B cell (primary cell): ENCODE measurements at regions of chr16 and their contacts with region 1.

Region 1: DNA sequence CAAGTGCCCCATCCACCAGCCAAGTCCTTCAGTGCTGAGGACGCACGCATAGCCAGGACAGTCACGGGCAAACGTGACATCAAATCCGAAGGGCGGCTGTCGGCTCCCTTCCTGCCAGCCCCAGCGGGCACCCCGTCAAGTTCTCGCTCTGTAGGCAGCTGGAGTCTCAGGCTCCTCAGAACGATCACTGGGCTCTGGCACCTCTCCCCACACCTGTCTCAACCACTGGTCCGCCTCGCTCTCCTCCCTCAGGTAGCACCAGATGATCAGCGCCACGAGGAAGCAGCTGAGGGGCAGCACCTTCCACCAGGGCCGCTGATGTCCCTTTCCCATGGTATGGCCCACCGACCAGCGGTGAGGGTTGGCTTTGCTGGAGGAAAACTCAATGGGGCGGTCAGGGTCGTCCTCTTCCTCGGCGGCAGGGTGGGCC is 421 bp downstream of the UQCC4 start:
- DNase-seq: no peak
- ATAC-seq: no peak
- H3K4me3 ChIP-seq: peak overlapping the region; percentile 74 to 95 (median 88)
- H3K4me3 Mint-ChIP-seq: peak overlapping the region; percentile 94
- H3K27ac ChIP-seq: peak overlapping the region; percentile 86 to 92
- H3K27ac Mint-ChIP-seq: peak overlapping the region; percentile 99
- H3K4me1 ChIP-seq: peaks cover 6 to 19% of the 10 kb centered on the region in 2 donors
- H3K4me1 Mint-ChIP-seq: peaks cover 22% of the 10 kb centered on the region
- H3K27me3 ChIP-seq: no peaks in the 10 kb centered on the region
- H3K27me3 Mint-ChIP-seq: no peaks in the 10 kb centered on the region
- CTCF ChIP-seq: no peak

Region 2: DNA sequence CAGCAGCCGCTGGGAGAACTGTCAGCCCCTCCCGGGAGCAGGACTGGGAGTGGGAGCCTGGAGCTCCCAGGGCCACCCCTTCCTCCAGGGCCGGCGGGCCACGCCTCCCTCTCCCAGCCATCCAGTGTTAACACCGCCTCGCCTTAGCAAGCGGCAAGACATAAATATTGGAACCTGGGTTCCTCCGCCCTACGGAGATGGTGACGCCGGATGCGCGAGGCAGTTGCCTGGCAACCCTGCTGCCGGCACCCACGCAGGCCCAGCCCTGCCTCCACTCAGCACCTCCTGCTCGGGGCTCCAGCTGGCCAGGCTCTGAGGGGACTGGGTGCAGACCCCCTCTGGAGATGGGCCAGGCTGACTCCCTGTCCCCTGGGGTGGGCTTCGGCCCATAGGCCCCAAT is 294.7 kb before region 1 on chr16:
- CTCF ChIA-PET with region 1: no interaction called
- POLR2A ChIA-PET with region 1: no interaction called
- intact Hi-C with region 1: no loop called
- DNase-seq: no peak
- ATAC-seq: no peak
- H3K4me3 ChIP-seq: no peak overlapping the region
- H3K4me3 Mint-ChIP-seq: no peak overlapping the region
- H3K27ac ChIP-seq: no peak overlapping the region
- H3K27ac Mint-ChIP-seq: no peak overlapping the region
- H3K4me1 ChIP-seq: no peaks in the 10 kb centered on the region
- H3K4me1 Mint-ChIP-seq: no peaks in the 10 kb centered on the region
- H3K27me3 ChIP-seq: no peaks in the 10 kb centered on the region
- H3K27me3 Mint-ChIP-seq: no peaks in the 10 kb centered on the region
- CTCF ChIP-seq: no peak

Region 3: DNA sequence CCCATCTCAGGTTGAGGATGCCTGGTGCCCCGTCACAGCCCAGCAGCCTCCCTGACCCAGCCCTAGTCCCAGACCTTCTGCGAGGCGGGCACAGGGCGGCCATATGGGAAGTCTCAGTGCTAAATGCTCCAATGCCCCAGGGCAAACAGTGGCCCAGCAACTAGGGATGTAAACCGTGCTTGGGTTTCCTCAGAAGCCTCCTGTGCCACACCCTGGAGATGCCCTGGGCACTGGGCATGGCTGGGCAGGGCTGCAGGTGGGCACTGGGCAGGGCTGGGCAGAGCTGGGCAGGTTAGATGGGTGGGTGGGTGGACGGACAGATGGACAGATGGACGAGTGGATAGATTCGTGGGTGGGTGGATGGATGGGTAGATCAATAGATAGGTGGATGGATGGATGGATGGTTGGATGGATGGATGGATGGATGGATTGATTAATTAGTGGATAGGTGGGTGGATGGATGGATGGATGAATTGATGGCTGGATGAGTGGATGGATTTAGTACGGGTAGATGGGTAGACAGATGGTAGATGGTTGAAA is 147.5 kb before region 1 on chr16:
- CTCF ChIA-PET with region 1: no interaction called
- POLR2A ChIA-PET with region 1: no interaction called
- intact Hi-C with region 1: no loop called
- DNase-seq: no peak
- ATAC-seq: no peak
- H3K4me3 ChIP-seq: no peak overlapping the region
- H3K4me3 Mint-ChIP-seq: no peak overlapping the region
- H3K27ac ChIP-seq: no peak overlapping the region
- H3K27ac Mint-ChIP-seq: no peak overlapping the region
- H3K4me1 ChIP-seq: peaks cover 0 to 4% of the 10 kb centered on the region in 2 donors
- H3K4me1 Mint-ChIP-seq: no peaks in the 10 kb centered on the region
- H3K27me3 ChIP-seq: peaks cover 0 to 24% (median 3%) of the 10 kb centered on the region in 4 experiments
- H3K27me3 Mint-ChIP-seq: peaks cover 29% of the 10 kb centered on the region
- CTCF ChIP-seq: no peak

Region 4: DNA sequence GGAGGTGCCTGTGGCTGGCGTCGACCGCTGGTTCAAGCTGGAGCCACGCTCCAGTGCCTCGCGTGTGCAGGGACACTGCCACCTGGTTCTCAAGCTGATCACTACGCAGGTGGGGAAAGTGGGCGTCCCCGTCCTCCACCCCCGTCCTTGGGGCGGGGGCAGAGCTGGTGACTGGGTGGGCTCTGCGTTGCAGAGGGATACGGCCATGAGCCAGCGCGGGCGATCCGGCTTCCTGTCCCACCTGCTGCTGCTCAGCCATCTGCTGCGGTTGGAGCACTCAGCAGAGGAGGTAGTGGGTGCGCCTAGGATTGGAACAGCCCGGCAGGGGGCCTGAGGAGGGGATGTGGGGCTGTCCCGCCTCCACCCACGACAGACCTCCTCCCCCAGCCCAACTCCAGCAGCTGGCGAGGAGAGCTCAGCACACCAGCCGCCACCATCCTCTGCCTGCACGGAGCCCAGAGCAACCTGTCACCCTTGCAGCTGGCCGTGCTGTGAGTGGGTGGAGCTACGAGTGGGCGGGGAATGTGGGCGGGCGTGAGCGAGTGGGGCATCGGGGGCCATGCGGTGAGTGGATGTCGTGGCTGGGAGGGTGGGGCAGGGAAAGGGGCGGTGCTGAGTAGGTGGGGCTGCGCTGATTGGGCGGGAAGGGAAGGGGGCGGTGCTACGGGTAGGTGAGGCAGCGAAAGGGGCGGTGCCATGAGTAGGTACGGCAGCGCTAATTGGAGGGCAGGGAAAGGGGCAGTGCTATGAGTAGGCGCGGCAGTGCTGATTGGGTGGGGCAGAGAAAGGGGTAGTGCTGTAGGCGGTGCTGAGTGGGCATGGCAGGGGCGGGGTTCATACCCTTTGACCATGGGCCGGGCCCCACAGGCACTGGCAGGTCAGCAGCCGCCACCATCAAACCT is 77.3 kb before region 1 on chr16:
- CTCF ChIA-PET with region 1: no interaction called
- POLR2A ChIA-PET with region 1: interaction called, 5 read pairs
- intact Hi-C with region 1: loop called (anchors 2 kb)
- DNase-seq: peak; percentile 98
- ATAC-seq: peak; percentile 86
- H3K4me3 ChIP-seq: peak overlapping the region in 4 of 5 experiments; percentile 38 to 68 (median 44)
- H3K4me3 Mint-ChIP-seq: peak overlapping the region; percentile 86
- H3K27ac ChIP-seq: peak overlapping the region in 1 of 2 donors; percentile 42
- H3K27ac Mint-ChIP-seq: peak overlapping the region; percentile 91
- H3K4me1 ChIP-seq: peaks cover 16 to 30% of the 10 kb centered on the region in 2 donors
- H3K4me1 Mint-ChIP-seq: peaks cover 23% of the 10 kb centered on the region
- H3K27me3 ChIP-seq: no peaks in the 10 kb centered on the region
- H3K27me3 Mint-ChIP-seq: no peaks in the 10 kb centered on the region
- CTCF ChIP-seq: peak; percentile 23

Region 5: GRCh38 chr16:1433756-1434155 is 13.6 kb after region 1 on chr16:
- CTCF ChIA-PET with region 1: no interaction called
- POLR2A ChIA-PET with region 1: interaction called, 12 read pairs
- intact Hi-C with region 1: no loop called
- DNase-seq: no peak
- ATAC-seq: no peak
- H3K4me3 ChIP-seq: peak overlapping the region in 1 of 5 experiments; percentile 43
- H3K4me3 Mint-ChIP-seq: no peak overlapping the region
- H3K27ac ChIP-seq: peak overlapping the region in 1 of 2 donors; percentile 9
- H3K27ac Mint-ChIP-seq: no peak overlapping the region
- H3K4me1 ChIP-seq: peaks cover 15 to 34% of the 10 kb centered on the region in 2 donors
- H3K4me1 Mint-ChIP-seq: peaks cover 5% of the 10 kb centered on the region
- H3K27me3 ChIP-seq: no peaks in the 10 kb centered on the region
- H3K27me3 Mint-ChIP-seq: no peaks in the 10 kb centered on the region
- CTCF ChIP-seq: no peak

Region 6: GRCh38 chr16:1481906-1482835 is 62.0 kb after region 1 on chr16:
- CTCF ChIA-PET with region 1: interaction called, 3 read pairs
- POLR2A ChIA-PET with region 1: interaction called, 6 read pairs
- intact Hi-C with region 1: loop called (anchors 2 kb)
- DNase-seq: no peak
- ATAC-seq: no peak
- H3K4me3 ChIP-seq: no peak overlapping the region
- H3K4me3 Mint-ChIP-seq: peak overlapping the region; percentile 4
- H3K27ac ChIP-seq: peak overlapping the region; percentile 41 to 95
- H3K27ac Mint-ChIP-seq: peak overlapping the region; percentile 48
- H3K4me1 ChIP-seq: peaks cover 24 to 37% of the 10 kb centered on the region in 2 donors
- H3K4me1 Mint-ChIP-seq: peaks cover 35% of the 10 kb centered on the region
- H3K27me3 ChIP-seq: no peaks in the 10 kb centered on the region
- H3K27me3 Mint-ChIP-seq: no peaks in the 10 kb centered on the region
- CTCF ChIP-seq: no peak

Region 7: DNA sequence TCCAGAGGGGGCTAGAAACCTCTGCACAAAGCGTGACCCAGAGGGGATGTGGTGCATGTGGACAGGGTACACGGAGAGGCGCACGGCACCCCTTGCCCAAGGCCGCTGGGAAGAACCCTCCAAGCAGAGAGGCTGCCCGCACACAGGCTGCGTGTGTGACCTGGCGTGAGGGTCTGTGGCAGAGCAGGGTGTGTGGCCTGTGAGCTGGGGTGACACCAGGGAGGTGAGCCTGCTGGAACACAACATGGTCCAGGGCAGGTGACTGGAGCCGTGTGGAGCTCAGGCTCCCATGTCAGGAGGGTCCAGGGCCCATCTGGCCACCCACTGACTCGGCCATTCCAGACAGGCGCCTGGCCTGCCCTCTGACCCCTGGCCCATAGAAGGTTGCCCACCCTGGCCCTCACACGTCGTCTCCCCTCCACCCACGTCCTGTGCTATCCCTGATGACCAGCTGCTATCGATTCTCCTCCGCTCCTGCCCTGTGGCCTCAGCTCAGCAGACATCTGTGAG is 98.6 kb after region 1 on chr16:
- CTCF ChIA-PET with region 1: no interaction called
- POLR2A ChIA-PET with region 1: no interaction called
- intact Hi-C with region 1: no loop called
- DNase-seq: no peak
- ATAC-seq: no peak
- H3K4me3 ChIP-seq: no peak overlapping the region
- H3K4me3 Mint-ChIP-seq: no peak overlapping the region
- H3K27ac ChIP-seq: no peak overlapping the region
- H3K27ac Mint-ChIP-seq: no peak overlapping the region
- H3K4me1 ChIP-seq: no peaks in the 10 kb centered on the region
- H3K4me1 Mint-ChIP-seq: no peaks in the 10 kb centered on the region
- H3K27me3 ChIP-seq: no peaks in the 10 kb centered on the region
- H3K27me3 Mint-ChIP-seq: no peaks in the 10 kb centered on the region
- CTCF ChIP-seq: no peak

Region 8: DNA sequence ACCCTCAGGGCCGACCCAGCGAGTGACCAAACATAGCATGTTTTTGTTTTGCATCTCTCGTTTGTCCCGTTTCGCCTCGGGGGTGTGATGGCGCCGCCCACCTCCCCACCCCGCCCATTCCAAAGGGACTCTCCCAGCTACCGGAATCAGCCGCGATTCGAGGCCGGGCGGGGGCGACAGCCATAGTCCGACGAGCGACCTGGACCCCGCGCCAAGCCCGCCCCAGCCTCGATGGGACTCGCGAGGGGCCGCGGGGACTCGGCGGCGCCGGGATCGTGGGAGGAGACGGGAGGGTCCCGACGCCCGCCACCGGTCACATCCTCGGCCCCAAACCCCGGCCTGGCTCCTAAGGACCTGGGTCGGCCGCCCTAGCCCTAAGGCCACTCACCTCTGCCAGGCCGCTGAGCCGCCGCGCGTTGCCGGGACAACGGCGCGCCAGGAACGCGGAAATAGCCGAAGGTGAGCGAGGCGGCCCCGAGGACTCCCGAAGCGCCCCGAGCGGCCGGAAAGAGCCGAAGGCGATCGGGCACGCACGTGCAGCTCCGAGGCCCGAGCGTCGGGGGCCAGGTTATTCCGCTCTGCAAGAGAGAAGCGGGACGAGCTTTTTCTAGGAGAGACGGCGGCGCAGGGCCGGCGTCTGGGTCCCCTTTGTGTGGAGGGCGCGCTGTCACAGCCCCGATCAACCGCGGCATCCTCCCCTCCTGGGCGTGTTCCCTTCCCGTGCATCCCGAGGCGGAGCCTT is 190.3 kb after region 1 on chr16:
- CTCF ChIA-PET with region 1: no interaction called
- POLR2A ChIA-PET with region 1: interaction called, 6 read pairs
- intact Hi-C with region 1: loop called (anchors 1 kb)
- DNase-seq: peak; percentile 95
- ATAC-seq: peak; percentile 46
- H3K4me3 ChIP-seq: peak overlapping the region in 4 of 5 experiments; percentile 61 to 75 (median 70)
- H3K4me3 Mint-ChIP-seq: peak overlapping the region; percentile 94
- H3K27ac ChIP-seq: peak overlapping the region; percentile 48 to 63
- H3K27ac Mint-ChIP-seq: peak overlapping the region; percentile 80
- H3K4me1 ChIP-seq: peaks cover 37 to 59% of the 10 kb centered on the region in 2 donors
- H3K4me1 Mint-ChIP-seq: peaks cover 39% of the 10 kb centered on the region
- H3K27me3 ChIP-seq: peaks cover 0 to 16% (median 2%) of the 10 kb centered on the region in 4 experiments
- H3K27me3 Mint-ChIP-seq: peaks cover 6% of the 10 kb centered on the region
- CTCF ChIP-seq: no peak

Region 9: GRCh38 chr16:2194852-2195321 is 774.8 kb after region 1 on chr16:
- CTCF ChIA-PET with region 1: no interaction called
- POLR2A ChIA-PET with region 1: no interaction called
- intact Hi-C with region 1: no loop called
- DNase-seq: peak; percentile 77
- ATAC-seq: peak; percentile 73
- H3K4me3 ChIP-seq: peak overlapping the region in 1 of 5 experiments; percentile 44
- H3K4me3 Mint-ChIP-seq: peak overlapping the region; percentile 78
- H3K27ac ChIP-seq: no peak overlapping the region
- H3K27ac Mint-ChIP-seq: peak overlapping the region; percentile 37
- H3K4me1 ChIP-seq: peaks cover 12 to 22% of the 10 kb centered on the region in 2 donors
- H3K4me1 Mint-ChIP-seq: peaks cover 10% of the 10 kb centered on the region
- H3K27me3 ChIP-seq: peaks cover 0 to 50% (median 20%) of the 10 kb centered on the region in 4 experiments
- H3K27me3 Mint-ChIP-seq: peaks cover 28% of the 10 kb centered on the region
- CTCF ChIP-seq: peak; percentile 47